ENCODE measurements at regions of chr2 and their contacts with region 1.

Region 1: DNA sequence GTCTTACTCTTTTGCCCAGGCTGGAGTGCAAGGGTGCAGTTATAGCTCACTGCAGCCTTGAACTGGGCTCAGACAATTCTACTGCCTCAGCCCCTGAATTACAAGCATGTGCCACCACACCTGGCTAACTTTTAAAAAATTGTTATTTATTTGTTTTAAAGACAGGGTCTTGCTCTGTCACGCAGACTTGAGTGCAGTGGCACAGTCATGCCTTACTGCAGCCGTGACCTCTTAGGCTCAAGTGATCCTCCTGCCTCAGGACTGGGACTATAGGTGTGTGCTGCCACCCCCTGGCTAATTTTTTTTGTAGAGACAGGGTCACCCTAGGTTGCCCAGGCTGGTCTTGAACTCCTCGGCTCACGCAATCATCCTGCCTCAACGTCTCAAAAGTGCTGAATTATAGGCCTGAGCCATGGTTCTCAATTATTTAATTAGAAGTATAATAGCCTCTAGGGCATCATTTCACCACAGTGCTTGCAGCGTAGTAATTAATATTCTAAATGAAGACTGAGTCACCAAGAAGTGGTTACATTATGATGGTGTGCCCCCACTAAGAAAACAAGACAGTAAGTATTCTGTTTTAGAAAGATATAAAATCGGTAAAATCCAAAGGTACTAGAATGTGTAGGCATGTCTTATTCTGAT is 69.6 kb downstream of the EML4 start:
- DNase-seq: peak in 4 of 5 donors; percentile 22 to 60 (median 30)
- H3K4me3 ChIP-seq: no peak overlapping the region
- H3K4me3 Mint-ChIP-seq: peak overlapping the region in 2 of 7 donors; percentile 23 to 26
- H3K27ac ChIP-seq: no peak overlapping the region
- H3K27ac Mint-ChIP-seq: peak overlapping the region in 3 of 8 donors; percentile 32 to 51 (median 33)
- H3K4me1 ChIP-seq: peaks cover 55% of the 10 kb centered on the region
- H3K4me1 Mint-ChIP-seq: peaks cover 81 to 99% (median 95%) of the 10 kb centered on the region in 3 donors
- H3K27me3 ChIP-seq: no peaks in the 10 kb centered on the region
- H3K27me3 Mint-ChIP-seq: no peaks in the 10 kb centered on the region

Region 2: GRCh38 chr2:42117923-42118753 is 120.6 kb before region 1 on chr2:
- CTCF ChIA-PET with region 1: no interaction called
- POLR2A ChIA-PET with region 1: no interaction called
- DNase-seq: no peak
- H3K4me3 ChIP-seq: no peak overlapping the region
- H3K4me3 Mint-ChIP-seq: peak overlapping the region in 3 of 7 donors; percentile 8 to 46 (median 10)
- H3K27ac ChIP-seq: no peak overlapping the region
- H3K27ac Mint-ChIP-seq: peak overlapping the region; percentile 44 to 90 (median 82)
- H3K4me1 ChIP-seq: peaks cover 49% of the 10 kb centered on the region
- H3K4me1 Mint-ChIP-seq: peaks cover 46 to 69% (median 69%) of the 10 kb centered on the region in 3 donors
- H3K27me3 ChIP-seq: no peaks in the 10 kb centered on the region
- H3K27me3 Mint-ChIP-seq: no peaks in the 10 kb centered on the region

Region 3: DNA sequence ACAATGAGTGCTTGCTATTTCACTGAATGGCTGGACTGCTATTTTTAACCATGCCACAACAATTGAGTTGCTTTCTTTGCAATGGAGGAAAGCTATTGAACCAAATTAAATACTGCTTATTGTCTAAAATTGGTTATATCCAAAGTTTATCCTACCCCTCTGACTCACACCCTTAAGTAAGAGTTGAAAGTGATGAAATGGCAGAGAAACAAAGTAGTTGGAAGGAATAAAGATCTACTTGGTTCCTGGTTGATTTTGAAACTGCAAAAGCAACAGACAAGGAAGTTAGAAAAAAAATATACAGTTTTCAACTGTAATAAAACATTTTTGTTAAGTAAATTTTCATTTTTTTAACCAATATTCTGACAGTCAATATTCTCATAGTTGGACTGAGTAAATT is 22.1 kb before region 1 on chr2:
- CTCF ChIA-PET with region 1: interaction called, 4 read pairs
- POLR2A ChIA-PET with region 1: interaction called, 15 read pairs
- DNase-seq: no peak
- H3K4me3 ChIP-seq: no peak overlapping the region
- H3K4me3 Mint-ChIP-seq: no peak overlapping the region
- H3K27ac ChIP-seq: no peak overlapping the region
- H3K27ac Mint-ChIP-seq: peak overlapping the region in 3 of 8 donors; percentile 0 to 46 (median 31)
- H3K4me1 ChIP-seq: peaks cover 35% of the 10 kb centered on the region
- H3K4me1 Mint-ChIP-seq: peaks cover 65 to 94% (median 90%) of the 10 kb centered on the region in 3 donors
- H3K27me3 ChIP-seq: no peaks in the 10 kb centered on the region
- H3K27me3 Mint-ChIP-seq: no peaks in the 10 kb centered on the region

Measured in CD8-positive, alpha-beta memory T cell (primary cell).